ENCODE measurements at regions of chr5 and their contacts with region 1.

Region 1: GRCh38 chr5:125484742-125485641 is 738.6 kb upstream of the ZNF608 start:
- DNase-seq: peak; percentile 87
- ATAC-seq: peak; percentile 90
- H3K4me3 ChIP-seq: peak overlapping the region; percentile 58
- H3K27ac ChIP-seq: peak overlapping the region; percentile 93
- H3K4me1 ChIP-seq: peaks cover 32% of the 10 kb centered on the region
- H3K27me3 ChIP-seq: no peaks in the 10 kb centered on the region
- CTCF ChIP-seq: no peak

Region 2: GRCh38 chr5:125446996-125447395 is 38.0 kb before region 1 on chr5:
- CTCF ChIA-PET with region 1: no interaction called
- POLR2A ChIA-PET with region 1: no interaction called
- intact Hi-C with region 1: loop called (anchors 1 kb)
- DNase-seq: peak; percentile 89
- ATAC-seq: peak; percentile 95
- H3K4me3 ChIP-seq: no peak overlapping the region
- H3K27ac ChIP-seq: 0 out of 2 replicates have a peak overlapping the region, but pooled peaks have one; percentile 37
- H3K4me1 ChIP-seq: peaks cover 7% of the 10 kb centered on the region; the same call in 1 of the 2 replicates
- H3K27me3 ChIP-seq: no peaks in the 10 kb centered on the region
- CTCF ChIP-seq: no peak

Region 3: DNA sequence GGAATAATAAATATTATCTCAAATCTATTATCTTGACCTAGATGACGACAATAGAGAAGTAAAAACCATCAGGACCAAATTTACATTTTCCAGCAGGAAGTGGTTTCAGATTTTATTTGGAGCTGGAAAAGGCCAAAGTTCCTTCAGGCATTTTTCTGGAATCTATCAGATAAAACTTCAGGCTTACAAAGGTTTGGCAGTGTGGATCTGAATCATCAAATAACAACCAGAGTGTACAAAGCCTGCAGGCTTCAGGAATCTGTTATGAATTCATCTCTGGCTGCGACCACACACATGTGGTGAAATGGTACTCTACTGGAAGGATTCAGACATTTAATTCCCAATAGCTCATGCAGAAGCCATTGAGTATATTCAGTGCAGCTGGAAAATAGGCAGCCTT is 211.8 kb after region 1 on chr5:
- CTCF ChIA-PET with region 1: no interaction called
- POLR2A ChIA-PET with region 1: no interaction called
- intact Hi-C with region 1: loop called (anchors 1 kb)
- DNase-seq: peak; percentile 69
- ATAC-seq: peak; percentile 83
- H3K4me3 ChIP-seq: no peak overlapping the region
- H3K27ac ChIP-seq: peak overlapping the region; percentile 40
- H3K4me1 ChIP-seq: peaks cover 15% of the 10 kb centered on the region
- H3K27me3 ChIP-seq: no peaks in the 10 kb centered on the region
- CTCF ChIP-seq: no peak

Measured in PC-3 (cell line).